OCI-LY7 (cell line): ENCODE measurements at regions of chr11 and their contacts with region 1.

Region 1: GRCh38 chr11:110200241-110200640 is 96.2 kb downstream of the RDX start:
- DNase-seq: no peak
- H3K4me3 ChIP-seq: no peak overlapping the region
- H3K27ac ChIP-seq: no peak overlapping the region
- H3K4me1 ChIP-seq: no peaks in the 10 kb centered on the region
- CTCF ChIP-seq: no peak

Region 2: DNA sequence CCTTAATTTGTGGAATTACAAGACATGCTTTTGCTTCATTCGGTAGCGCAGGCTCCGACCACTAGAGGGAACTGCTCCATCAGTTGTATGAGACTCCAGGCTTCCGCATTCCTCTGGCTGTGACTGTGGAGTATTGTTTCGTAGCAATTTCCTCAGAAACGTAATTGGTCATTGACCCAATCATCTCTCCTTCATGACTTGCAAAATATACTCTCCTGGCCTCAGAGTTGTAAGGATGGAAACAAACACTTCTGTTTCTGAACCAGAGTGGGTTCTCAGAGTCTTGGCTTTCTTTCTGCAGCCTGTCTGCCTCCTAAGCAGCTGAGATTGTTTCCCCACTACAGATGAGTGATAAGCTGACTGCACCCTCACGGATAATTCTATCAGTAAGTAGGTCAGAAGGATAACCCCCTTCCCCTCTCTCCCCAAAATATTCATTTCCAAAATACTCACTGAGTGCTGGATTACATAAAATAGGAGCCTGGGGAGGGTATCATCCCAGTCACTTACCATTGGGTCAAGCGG is 253.9 kb before region 1 on chr11:
- CTCF ChIA-PET with region 1: no interaction called
- POLR2A ChIA-PET with region 1: no interaction called
- intact Hi-C with region 1: loop called (anchors 1 kb)
- DNase-seq: peak; percentile 87
- H3K4me3 ChIP-seq: peak overlapping the region; percentile 48
- H3K27ac ChIP-seq: no peak overlapping the region
- H3K4me1 ChIP-seq: peaks cover 9% of the 10 kb centered on the region
- CTCF ChIP-seq: peak; percentile 99

Region 3: DNA sequence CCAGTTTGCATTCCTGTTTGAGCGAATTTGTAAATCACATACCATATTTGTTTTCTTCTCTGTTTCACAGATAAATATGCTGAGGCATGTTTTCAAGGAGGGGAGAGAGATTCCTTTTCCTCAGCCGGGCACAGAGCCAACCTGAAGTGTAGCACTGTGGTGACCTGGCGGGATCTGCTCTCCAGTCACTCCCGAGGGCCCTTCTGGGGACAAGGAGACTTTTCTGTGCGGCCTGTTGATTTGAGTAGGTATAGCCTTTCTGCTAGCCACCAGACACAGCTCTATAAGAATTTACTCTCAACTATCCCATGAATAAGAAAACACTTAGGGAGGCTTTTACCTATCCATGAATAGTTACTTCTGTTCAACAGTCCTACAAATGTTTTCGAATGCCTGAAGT is 166.1 kb after region 1 on chr11:
- CTCF ChIA-PET with region 1: no interaction called
- POLR2A ChIA-PET with region 1: interaction called, 5 read pairs
- intact Hi-C with region 1: loop called (anchors 1 kb)
- DNase-seq: no peak
- H3K4me3 ChIP-seq: no peak overlapping the region
- H3K27ac ChIP-seq: no peak overlapping the region
- H3K4me1 ChIP-seq: peaks cover 6% of the 10 kb centered on the region
- CTCF ChIP-seq: no peak

Region 4: DNA sequence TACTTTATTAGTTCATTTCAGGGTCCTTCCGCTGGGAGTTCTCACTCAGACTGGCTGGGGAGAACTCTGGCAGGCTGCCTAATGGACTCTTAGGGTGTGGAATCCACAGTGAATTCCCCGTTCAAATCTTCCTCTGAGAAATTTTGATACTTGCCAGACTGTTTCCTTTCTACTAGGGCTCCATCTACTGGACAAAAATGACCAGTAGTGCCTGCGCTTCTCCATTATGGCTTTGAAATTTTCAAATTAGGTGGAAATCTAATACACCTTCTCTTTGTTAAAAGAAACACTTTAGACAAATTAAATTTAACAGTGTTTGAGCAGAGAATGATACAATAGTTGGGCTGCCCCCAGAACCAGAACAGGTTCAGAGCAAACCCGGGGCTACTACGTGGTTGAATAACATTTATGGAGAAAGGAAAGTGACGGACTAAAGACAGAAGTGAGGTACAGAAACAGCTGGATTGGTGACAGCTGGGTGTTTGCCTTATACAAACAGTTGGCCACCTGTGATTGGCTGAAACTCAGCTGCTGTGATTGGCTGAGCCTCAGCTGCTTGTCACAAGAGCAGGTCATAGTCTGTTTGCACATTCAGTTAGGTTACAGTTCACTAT is 176.6 kb after region 1 on chr11:
- CTCF ChIA-PET with region 1: interaction called, 8 read pairs
- POLR2A ChIA-PET with region 1: interaction called, 3 read pairs
- intact Hi-C with region 1: loop called (anchors 1 kb)
- DNase-seq: peak; percentile 68
- H3K4me3 ChIP-seq: peak overlapping the region; percentile 31
- H3K27ac ChIP-seq: no peak overlapping the region
- H3K4me1 ChIP-seq: peaks cover 7% of the 10 kb centered on the region
- CTCF ChIP-seq: peak; percentile 96

Region 5: GRCh38 chr11:111446404-111447111 is 1246.3 kb after region 1 on chr11:
- CTCF ChIA-PET with region 1: no interaction called
- POLR2A ChIA-PET with region 1: no interaction called
- intact Hi-C with region 1: loop called (anchors 10 kb)
- DNase-seq: peak; percentile 96
- H3K4me3 ChIP-seq: no peak overlapping the region
- H3K27ac ChIP-seq: no peak overlapping the region
- H3K4me1 ChIP-seq: peaks cover 53% of the 10 kb centered on the region
- CTCF ChIP-seq: peak; percentile 95